Left ventricle myocardium inferior (tissue), 1 donor: ENCODE measurements at regions of chr10 and their contacts with region 1.

Region 1: GRCh38 chr10:102394079-102394800 is 1.3 kb upstream of the NFKB2 start:
- DNase-seq: peak; percentile 95
- H3K4me3 ChIP-seq: peak overlapping the region; percentile 72
- H3K27ac ChIP-seq: peak overlapping the region; percentile 96
- H3K4me1 ChIP-seq: peaks cover 46% of the 10 kb centered on the region
- H3K27me3 ChIP-seq: no peaks in the 10 kb centered on the region
- CTCF ChIP-seq: peak; percentile 46

Region 2: DNA sequence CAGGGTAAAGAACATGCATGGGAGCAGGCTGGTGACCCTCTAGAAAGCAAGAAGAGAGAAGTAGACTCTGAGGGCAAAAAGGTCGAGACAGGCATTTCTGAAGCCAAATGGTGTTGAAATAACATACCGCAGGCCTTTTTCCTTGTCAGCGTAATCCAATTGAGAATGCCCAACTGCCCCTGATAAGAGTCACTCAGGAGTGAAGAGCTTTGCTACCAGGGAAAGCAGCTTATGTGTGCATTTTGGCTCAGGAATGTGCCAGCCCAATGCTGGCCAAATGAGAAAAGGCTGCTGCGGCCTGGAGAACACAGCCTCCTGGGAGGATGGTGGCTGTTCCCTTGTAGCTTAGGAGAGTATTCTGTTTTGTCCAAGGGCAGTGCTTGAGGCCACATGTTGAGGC is 60.1 kb before region 1 on chr10:
- intact Hi-C with region 1: no loop called
- DNase-seq: peak; percentile 51
- H3K4me3 ChIP-seq: no peak overlapping the region
- H3K27ac ChIP-seq: peak overlapping the region; percentile 86
- H3K4me1 ChIP-seq: peaks cover 70% of the 10 kb centered on the region
- H3K27me3 ChIP-seq: no peaks in the 10 kb centered on the region
- CTCF ChIP-seq: no peak

Region 3: DNA sequence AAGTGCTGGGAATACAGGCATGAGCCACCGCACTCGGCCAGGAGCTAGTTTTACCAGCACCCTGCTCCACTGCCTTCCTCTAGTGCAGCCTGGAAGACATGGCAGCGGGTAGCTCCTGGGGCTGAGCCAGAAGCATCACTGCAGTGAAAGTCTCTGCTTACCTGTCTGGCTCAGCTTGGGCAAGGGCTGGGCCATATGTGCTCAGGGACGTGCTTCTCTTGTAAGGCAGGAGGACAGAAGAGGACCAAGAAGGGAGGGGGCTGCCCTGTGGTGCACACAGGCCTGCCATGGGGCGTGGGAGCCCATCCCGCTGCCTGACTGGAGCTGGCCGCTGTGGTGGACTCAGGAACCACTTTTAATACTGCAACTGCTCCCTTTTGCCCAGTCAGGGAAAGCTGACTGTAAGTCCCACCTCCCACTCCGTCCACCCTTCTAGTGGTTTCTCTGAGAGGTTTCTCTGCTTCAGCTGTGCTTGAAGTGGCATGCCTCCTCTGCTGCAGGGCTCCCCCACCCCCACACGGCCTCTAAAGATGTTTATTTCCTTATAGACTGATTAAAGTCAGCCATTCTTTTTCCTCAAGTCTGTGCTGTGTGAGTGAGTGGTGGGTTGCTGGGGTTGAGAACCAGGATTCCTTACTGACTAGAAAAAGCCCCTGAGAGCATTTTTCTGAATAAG is 82.4 kb after region 1 on chr10:
- intact Hi-C with region 1: loop called (anchors 10 kb)
- DNase-seq: no peak
- H3K4me3 ChIP-seq: no peak overlapping the region
- H3K27ac ChIP-seq: no peak overlapping the region
- H3K4me1 ChIP-seq: peaks cover 19% of the 10 kb centered on the region
- H3K27me3 ChIP-seq: no peaks in the 10 kb centered on the region
- CTCF ChIP-seq: no peak

Region 4: DNA sequence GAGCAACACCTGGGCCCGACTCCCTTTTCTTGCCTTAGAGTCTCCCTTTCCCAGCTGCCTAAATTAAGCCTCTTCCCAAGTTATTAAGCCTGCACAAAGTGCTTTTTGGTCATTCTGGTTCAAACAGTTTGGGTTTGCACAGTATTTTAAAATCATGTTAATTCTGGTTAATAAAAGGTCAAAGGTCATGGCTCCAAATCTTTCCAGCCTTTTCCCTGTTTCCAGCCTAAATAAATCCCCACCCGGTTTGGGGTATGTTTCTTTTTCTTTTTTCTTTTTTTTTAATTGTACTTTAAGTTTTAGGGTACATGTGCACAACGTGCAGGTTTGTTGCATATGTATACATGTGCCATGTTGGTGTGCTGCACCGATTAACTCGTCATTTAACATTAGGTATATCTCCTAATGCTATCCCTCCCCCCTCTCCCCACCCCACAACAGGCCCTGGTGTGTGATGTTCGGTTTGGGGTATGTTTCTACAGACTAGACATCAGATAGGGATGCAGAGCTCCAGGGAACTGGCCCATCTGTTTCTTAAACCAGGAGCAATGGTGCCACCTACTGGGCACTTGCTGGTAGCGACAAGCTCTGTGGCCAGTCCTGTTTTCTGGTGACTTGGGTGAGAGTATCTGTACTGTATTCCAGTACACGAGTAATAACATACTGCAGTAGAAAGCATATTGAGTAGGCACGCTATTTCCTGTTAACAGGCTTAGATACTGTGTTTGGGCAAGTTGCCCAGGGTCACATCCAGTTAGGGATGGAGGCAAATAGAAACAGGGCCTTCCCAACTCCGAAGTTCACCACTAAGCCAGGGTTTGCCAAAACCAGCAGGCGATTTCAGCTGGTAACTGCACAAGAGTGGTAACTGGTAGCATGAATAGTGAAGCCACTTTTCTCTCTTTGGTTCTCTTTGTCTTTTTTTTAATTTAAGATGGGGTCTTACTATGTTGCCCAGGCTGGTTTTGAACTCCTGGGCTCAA is 189.5 kb after region 1 on chr10:
- intact Hi-C with region 1: loop called (anchors 10 kb)
- DNase-seq: peak; percentile 82
- H3K4me3 ChIP-seq: no peak overlapping the region
- H3K27ac ChIP-seq: no peak overlapping the region
- H3K4me1 ChIP-seq: peaks cover 25% of the 10 kb centered on the region
- H3K27me3 ChIP-seq: no peaks in the 10 kb centered on the region
- CTCF ChIP-seq: peak; percentile 91